Activated CD4-positive, alpha-beta memory T cell treated with anti-CD3 and anti-CD28 coated beads, Interleukin-2, amount 10 ng/mL, durations not matched to agents 7 days and 5 days (primary cell): ENCODE measurements at regions of chr17 and their contacts with region 1.

Region 1: DNA sequence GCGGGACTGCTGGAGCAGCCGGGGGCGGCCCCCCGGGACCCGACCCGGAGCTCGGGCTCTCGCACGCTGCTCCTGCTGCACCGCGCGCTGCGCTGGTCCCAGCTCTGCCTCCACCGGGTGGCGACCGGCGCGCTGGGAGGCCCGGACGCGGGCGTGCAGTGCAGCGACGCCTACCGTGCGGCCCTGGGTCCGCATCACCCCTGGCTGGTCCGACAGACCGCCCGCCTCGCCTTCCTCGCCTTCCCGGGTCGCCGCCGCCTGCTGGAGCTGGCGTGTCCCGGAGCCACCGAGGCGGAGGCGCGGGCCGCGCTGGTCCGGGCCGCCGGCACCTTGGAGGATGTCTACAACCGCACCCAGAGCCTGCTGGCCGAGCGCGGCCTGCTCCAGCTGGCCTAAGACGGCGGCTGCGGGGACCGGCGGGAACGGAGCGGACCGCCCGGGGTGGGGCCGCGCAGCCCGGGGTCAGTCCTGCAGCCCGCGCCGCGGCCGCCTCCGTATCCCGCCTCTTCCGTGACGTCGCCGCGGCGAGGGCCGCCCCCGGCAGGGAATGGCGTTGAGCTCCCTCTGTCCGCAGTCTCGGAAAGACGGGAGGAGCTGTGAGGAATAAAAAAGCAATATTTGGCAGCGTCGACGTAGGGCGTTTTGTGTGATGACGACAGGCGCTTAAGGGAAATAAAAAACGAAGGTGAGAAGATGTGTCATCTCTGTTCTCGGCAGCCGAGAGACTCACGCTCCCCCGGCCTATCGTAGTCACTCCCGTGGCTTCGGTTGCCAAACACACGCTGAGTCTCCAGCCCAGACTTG is 1.3 kb downstream of the GLTPD2 start:
- DNase-seq: peak; percentile 85
- H3K4me3 Mint-ChIP-seq: peak overlapping the region; percentile 87
- H3K27ac Mint-ChIP-seq: peak overlapping the region; percentile 89
- H3K4me1 Mint-ChIP-seq: peaks cover 34% of the 10 kb centered on the region
- H3K27me3 Mint-ChIP-seq: peaks cover 35% of the 10 kb centered on the region

Region 2: GRCh38 chr17:4565209-4566141 is 224.6 kb before region 1 on chr17:
- CTCF ChIA-PET with region 1: interaction called, 16 read pairs
- POLR2A ChIA-PET with region 1: no interaction called
- DNase-seq: peak; percentile 59
- H3K4me3 Mint-ChIP-seq: no peak overlapping the region
- H3K27ac Mint-ChIP-seq: no peak overlapping the region
- H3K4me1 Mint-ChIP-seq: peaks cover 34% of the 10 kb centered on the region
- H3K27me3 Mint-ChIP-seq: peaks cover 12% of the 10 kb centered on the region

Region 3: DNA sequence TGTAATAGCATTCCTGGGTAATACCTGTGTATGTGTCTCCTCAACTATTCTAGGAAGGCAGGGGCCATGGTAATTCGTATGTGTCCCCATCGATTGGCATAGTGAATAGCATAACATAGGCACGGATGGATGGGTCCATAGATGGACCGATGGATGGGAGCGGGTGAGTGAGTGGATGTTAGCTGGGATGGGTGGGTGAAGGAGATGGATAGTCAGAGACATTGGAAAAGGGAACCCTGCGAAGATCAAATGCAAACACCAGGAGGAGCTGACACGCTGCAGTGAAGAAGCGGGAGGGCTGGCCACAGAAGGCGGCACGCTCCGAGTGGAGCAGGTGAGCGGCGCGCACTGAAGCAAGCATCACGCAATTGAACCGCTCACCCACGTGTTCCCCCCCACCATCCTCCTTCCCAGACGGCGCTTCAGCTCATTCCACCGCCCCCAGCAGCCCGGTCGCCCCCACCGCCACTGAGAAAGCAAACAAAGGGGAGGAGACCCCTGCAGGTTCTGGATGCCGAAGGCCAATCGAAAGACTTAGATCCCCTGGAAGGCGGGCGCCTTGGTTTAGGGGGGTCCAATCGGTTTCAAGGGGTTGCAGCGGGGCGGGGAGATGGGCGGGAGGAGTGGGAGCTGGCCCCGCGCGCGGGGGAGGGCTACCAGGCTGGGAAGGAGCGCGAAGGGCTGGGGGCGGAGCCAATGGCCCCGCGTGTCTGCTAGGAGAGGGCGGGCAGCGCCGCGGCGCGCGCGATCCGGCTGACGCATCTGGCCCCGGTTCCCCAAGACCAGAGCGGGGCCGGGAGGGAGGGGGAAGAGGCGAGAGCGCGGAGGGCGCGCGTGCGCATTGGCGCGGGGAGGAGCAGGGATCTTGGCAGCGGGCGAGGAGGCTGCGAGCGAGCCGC is 80.1 kb before region 1 on chr17 and contains the start of gene ARRB2:
- CTCF ChIA-PET with region 1: interaction called, 22 read pairs
- POLR2A ChIA-PET with region 1: interaction called, 33 read pairs
- DNase-seq: peak; percentile 99
- H3K4me3 Mint-ChIP-seq: peak within 1 kb of the TSS; percentile 93
- H3K27ac Mint-ChIP-seq: peak within 1 kb of the TSS; percentile 98
- H3K4me1 Mint-ChIP-seq: peaks cover 65% of the 10 kb centered on the region
- H3K27me3 Mint-ChIP-seq: no peaks in the 10 kb centered on the region
- total RNA-seq, gene ARRB2: 372 to 378 TPM

Region 4: GRCh38 chr17:4733073-4733531 is 57.0 kb before region 1 on chr17:
- CTCF ChIA-PET with region 1: interaction called, 24 read pairs
- POLR2A ChIA-PET with region 1: interaction called, 6 read pairs
- DNase-seq: no peak
- H3K4me3 Mint-ChIP-seq: peak overlapping the region; percentile 30
- H3K27ac Mint-ChIP-seq: no peak overlapping the region
- H3K4me1 Mint-ChIP-seq: peaks cover 52% of the 10 kb centered on the region
- H3K27me3 Mint-ChIP-seq: peaks cover 8% of the 10 kb centered on the region

Region 5: GRCh38 chr17:4771519-4772234 is 18.4 kb before region 1 on chr17 and contains the start of gene TM4SF5:
- CTCF ChIA-PET with region 1: interaction called, 18 read pairs
- POLR2A ChIA-PET with region 1: interaction called, 9 read pairs
- DNase-seq: peak; percentile 72
- H3K4me3 Mint-ChIP-seq: no peak within 1 kb of the TSS
- H3K27ac Mint-ChIP-seq: peak within 1 kb of the TSS; percentile 38
- H3K4me1 Mint-ChIP-seq: peaks cover 28% of the 10 kb centered on the region
- H3K27me3 Mint-ChIP-seq: peaks cover 22% of the 10 kb centered on the region
- total RNA-seq, gene TM4SF5: 0.35 TPM in 1 of 2 experiments, not detected in the other

Region 6: GRCh38 chr17:4913994-4914393 is 123.9 kb after region 1 on chr17:
- CTCF ChIA-PET with region 1: no interaction called
- POLR2A ChIA-PET with region 1: no interaction called
- DNase-seq: no peak
- H3K4me3 Mint-ChIP-seq: no peak overlapping the region
- H3K27ac Mint-ChIP-seq: no peak overlapping the region
- H3K4me1 Mint-ChIP-seq: no peaks in the 10 kb centered on the region
- H3K27me3 Mint-ChIP-seq: peaks cover 10% of the 10 kb centered on the region

Region 7: DNA sequence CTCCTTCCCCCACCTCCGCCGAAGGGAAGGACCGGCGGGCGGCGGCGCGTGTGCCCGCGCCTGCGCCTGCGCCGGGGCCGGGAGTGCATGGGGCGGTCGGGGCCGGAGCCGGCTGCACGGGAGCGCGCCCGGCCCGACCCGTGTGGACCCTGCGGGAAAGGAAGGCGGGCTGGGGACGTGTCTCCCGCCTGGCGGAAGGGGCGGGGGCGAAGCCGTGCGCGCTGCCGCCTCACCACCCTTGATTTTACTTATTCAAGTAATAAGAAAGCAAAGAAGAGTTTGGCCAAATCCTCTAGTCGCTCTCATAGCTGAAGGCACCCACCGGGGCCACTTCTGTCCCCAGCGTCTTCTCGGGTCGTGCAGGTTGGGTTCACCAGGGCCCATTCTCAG is 158.8 kb after region 1 on chr17:
- CTCF ChIA-PET with region 1: no interaction called
- POLR2A ChIA-PET with region 1: interaction called, 13 read pairs
- DNase-seq: peak; percentile 83
- H3K4me3 Mint-ChIP-seq: peak overlapping the region; percentile 96
- H3K27ac Mint-ChIP-seq: peak overlapping the region; percentile 100
- H3K4me1 Mint-ChIP-seq: peaks cover 44% of the 10 kb centered on the region
- H3K27me3 Mint-ChIP-seq: no peaks in the 10 kb centered on the region